ENCODE measurements at regions of chr3 and their contacts with region 1.

Region 1: DNA sequence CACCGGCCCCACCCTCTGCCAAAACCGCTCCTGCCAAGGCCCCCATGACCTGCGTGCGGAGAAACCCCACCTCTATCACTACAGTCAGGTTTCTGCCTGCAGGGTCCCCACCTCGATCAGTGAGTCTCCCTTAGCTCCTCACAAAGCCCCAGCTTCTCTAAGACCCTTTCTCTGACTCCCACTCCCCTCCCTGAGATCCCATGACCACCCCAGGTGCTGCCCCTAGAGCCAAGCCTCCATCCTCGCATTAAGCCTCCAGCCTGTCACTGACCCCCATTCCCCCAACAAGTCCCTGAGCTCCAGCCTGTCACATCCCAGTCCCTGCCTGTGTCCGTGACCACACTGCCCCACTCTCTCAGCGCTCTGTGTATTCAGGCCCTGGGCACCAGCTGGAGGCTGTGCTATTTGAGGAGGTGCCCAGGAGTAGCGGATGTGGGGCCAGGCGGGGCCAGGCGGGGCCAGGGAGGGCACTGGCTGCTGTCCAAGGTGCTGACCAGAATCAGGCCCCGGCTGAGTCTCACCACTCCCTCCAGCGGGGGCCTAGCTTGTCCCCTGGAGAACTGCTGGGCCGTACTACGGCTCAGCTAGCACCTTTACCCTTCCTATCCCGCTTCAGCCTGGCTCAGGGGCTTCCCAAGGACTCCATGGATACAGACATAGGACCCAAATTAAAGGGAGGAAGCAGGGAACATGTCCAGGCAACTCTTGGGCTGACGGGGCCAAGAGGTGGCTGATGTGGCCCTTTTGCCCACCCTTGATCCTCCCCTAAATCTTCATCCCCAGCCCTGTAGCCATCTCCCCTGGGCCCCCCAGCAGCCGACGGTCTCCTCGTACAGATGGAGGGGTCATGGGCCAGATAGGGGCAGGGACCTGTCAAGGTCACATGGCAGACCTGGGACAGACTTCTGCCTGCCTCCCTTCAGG is 1.2 kb downstream of the HHATL start:
- DNase-seq: peak; percentile 87
- ATAC-seq: peak; percentile 75

Region 2: DNA sequence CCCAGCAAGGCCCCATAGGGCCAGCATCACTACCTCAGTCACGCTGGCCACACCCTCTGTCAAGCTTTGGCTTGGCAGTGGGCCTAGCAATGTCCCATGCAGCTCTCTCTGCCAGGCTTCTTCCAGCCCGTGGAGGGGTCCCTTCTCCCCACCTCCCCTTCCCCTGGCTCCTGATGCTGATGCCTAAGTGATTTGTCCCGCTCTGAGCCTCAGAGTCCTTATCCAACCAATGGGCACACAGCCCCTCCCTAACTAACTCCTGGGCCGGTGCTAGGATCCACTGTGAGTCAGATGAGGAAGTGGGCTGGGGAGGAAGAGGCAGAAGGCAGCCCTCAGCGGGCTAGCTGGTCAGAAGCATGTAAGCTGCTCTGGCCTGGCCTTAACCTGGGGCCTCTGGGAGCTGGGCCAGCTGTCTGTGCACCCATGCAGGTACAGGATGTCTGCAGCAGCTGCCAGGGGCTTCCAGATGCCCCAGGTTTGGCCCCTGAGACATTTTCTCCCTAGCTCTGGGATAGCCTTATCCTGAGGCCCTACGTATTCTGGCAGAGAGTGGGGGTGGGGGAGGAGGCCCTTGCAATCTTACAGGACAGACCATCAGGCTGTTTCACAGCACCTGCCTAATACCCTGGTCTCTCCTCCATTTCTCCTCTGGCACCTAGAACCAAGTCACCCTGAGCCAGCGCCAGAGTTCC is 48.6 kb before region 1 on chr3:
- intact Hi-C with region 1: loop called (anchors 1 kb)
- DNase-seq: peak; percentile 89
- ATAC-seq: peak; percentile 33

Region 3: DNA sequence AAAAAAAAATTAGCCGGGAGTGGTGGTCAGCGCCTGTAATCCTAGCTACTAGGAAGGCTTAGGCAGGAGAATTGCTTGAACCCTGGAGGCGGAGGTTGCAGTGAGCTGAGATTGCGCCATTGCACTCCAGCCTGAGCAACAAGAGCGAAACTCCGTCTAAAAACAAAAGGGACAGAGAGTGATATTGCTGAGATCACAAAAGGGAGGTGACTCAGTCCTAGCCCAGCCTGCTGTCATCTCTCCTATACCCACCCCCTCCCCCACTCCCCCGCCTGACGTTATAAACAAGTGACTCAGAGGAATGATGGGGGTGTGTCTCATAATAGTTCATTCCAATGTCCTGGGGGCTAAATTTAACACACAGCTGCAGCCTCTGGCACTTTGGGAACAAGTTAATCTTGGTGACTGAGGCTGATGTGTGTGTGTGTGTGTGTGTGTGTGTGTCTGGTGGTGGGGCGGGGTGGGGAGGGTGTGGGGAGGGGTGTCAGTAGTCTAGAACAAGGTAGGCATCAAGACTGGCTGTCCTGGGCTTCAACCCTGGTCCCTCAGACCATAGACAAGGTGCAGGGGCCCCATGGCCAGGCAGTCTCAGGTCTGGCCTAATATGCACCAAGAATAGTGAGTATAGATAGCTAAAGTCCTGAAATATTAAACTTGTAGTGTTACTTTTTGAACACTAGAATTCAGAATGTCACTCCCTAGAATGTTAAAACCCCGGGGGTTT is 17.4 kb before region 1 on chr3:
- intact Hi-C with region 1: loop called (anchors 1 kb)
- DNase-seq: no peak
- ATAC-seq: peak; percentile 90

Region 4: DNA sequence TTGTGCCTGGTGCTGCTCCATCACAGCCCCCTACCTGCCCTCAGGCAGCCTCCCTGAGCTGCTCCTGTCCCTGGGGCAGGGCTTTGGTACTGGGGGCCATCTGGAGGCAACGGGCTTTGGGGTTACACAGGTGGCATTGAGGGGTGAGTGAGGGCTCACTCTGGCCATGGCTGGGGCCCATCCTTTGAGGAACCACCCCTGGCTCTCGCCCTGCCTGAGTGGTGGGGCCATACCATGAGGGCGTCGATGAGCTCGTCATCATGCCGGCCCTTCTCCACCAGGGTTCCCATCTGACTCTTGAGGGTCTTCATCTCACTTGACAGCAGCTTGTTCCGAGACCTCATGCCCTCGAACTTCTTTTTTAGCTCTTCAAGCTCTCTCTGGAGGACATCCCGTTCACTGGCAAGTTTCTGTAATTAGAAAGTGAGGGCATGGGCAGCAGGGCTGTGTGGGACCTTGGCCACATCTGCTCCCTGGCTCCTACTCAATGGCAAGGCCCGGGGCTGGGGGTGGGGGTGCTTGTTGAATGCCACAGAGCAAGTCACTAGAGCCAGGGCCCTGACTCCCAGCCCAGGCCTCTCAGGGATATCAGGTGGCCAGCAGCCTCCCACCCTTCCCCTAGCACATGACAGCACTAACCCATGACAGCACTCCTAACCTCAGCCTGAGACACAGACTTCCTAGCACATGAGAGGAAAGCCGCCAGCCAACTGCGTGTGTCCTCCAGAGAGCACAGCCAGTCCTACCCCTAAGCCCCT is 38.2 kb after region 1 on chr3:
- intact Hi-C with region 1: loop called (anchors 1 kb)
- DNase-seq: peak; percentile 92
- ATAC-seq: peak; percentile 96

Region 5: GRCh38 chr3:42749753-42750231 is 48.4 kb after region 1 on chr3:
- intact Hi-C with region 1: loop called (anchors 1 kb)
- DNase-seq: no peak
- ATAC-seq: peak; percentile 17

Measured in Right ventricle myocardium inferior (tissue), 1 donor.